Heart right ventricle (tissue), 16 donors: ENCODE measurements at regions of chr17 and their contacts with region 1.

Region 1: DNA sequence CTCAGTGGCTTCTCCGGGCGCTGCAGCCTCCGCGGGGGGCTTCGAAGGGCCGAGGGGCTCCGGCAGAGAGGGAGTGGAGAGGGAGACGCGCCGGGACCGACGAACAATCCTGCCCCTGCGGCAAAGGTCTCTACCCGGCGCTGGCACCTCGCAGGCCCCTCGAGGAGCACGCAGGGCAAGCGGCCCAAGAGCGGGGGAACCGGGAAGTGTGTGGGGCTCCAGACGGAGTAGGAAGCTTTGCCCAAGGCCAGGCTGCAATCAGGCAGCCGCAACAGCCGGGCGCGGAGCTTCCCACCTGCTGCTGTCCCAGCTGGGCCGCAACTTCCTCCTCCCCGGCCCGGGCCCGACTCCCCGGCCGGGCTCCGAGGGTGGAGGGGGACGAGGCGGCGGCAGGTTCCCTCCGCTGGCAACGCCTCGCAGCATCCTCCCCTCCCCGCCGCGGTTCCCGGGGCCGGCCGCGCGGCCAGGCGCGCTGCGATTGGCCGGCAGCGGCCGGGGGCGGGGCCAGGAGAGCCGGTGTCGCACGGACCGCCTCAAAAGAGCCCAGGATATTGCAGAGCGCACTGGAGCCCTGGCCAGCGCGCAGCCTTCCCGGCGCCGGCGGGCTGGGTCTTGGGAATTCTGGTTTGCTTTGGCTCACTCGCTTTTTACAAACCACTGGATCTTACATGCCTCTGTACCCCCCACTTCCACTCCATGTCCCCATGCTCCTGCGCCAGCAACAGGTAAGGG is at the start of gene KCNJ2:
- DNase-seq: peak; percentile 88 to 91
- ATAC-seq: peak; percentile 87 to 97 (median 94)
- H3K4me3 ChIP-seq: peak within 1 kb of the TSS; percentile 62 to 97 (median 78)
- H3K27ac ChIP-seq: peak within 1 kb of the TSS; percentile 89 to 98 (median 95)
- H3K4me1 ChIP-seq: peaks cover 0 to 29% (median 14%) of the 10 kb centered on the region in 9 donors
- H3K27me3 ChIP-seq: no peaks in the 10 kb centered on the region
- CTCF ChIP-seq: no peak
- total RNA-seq, gene KCNJ2: 16.7 to 76.0 (median 46.8) TPM

Region 2: GRCh38 chr17:69607162-69607834 is 561.8 kb before region 1 on chr17:
- intact Hi-C with region 1: loop called in 1 of 10 experiments (anchors 5 kb)
- DNase-seq: peak; percentile 65 to 78
- ATAC-seq: peak; percentile 78 to 92 (median 87)
- H3K4me3 ChIP-seq: no peak overlapping the region
- H3K27ac ChIP-seq: peak overlapping the region; percentile 5 to 82 (median 50)
- H3K4me1 ChIP-seq: peaks cover 15 to 40% (median 35%) of the 10 kb centered on the region in 9 donors
- H3K27me3 ChIP-seq: no peaks in the 10 kb centered on the region
- CTCF ChIP-seq: peak; percentile 74 to 92 (median 88)

Region 3: DNA sequence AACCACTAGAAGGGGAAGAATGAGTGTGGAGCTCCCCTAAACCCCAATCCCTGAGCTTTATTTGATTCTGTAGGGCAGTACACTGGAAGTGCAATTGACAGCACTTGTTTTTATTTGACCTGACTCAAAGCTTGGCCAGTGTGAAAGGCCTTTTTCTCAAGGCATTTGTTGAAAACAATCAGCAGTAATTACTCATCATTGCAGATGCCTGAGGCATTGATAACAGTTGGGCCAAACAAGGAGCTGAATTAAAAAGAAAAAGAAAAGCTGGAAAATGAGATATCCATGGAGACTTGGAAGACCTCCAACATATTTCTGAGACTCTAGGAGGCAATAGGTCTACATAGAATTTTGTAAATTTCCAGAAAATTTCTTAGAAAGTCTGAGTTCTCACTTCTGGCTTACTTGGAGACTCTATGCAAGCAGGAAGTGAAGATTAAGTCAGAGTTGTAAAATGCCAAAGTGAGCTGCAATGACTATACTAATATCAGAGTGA is 294.9 kb before region 1 on chr17:
- intact Hi-C with region 1: no loop called
- DNase-seq: no peak
- ATAC-seq: no peak
- H3K4me3 ChIP-seq: no peak overlapping the region
- H3K27ac ChIP-seq: no peak overlapping the region
- H3K4me1 ChIP-seq: peaks cover 0 to 7% (median 0%) of the 10 kb centered on the region in 9 donors
- H3K27me3 ChIP-seq: no peaks in the 10 kb centered on the region
- CTCF ChIP-seq: no peak

Region 4: DNA sequence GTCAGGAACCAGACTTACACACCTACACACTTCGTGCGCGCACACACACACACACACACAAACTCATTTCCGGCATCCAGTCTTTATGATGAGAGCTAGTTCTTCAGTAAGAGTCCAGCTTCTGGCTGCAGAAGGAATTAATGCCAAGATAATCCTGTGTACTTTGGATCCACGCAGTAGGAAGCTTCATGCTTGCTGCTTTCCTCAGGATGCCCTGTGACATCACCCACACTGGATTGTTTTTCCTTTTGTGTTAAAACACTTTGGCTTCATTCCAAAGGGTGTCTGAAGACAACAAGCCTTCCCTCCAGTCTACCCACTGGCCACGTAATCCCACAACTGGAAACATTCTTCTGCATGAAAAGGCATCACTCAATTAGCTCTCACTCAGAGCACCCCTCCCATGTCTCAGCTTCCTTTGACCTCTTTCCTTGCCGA is 58.7 kb before region 1 on chr17:
- intact Hi-C with region 1: no loop called
- DNase-seq: peak in 1 of 2 donors; percentile 49
- ATAC-seq: peak; percentile 63 to 95 (median 76)
- H3K4me3 ChIP-seq: no peak overlapping the region
- H3K27ac ChIP-seq: peak overlapping the region in 8 of 10 donors; percentile 3 to 77 (median 54)
- H3K4me1 ChIP-seq: peaks cover 3 to 30% (median 15%) of the 10 kb centered on the region in 9 donors
- H3K27me3 ChIP-seq: no peaks in the 10 kb centered on the region
- CTCF ChIP-seq: no peak

Region 5: GRCh38 chr17:70307430-70308225 is 138.5 kb after region 1 on chr17:
- intact Hi-C with region 1: loop called in 4 of 10 experiments (anchors 5 to 10 kb)
- DNase-seq: no peak
- ATAC-seq: peak in 5 of 8 donors; percentile 47 to 85 (median 70)
- H3K4me3 ChIP-seq: no peak overlapping the region
- H3K27ac ChIP-seq: no peak overlapping the region
- H3K4me1 ChIP-seq: peaks cover 0 to 28% (median 0%) of the 10 kb centered on the region in 9 donors
- H3K27me3 ChIP-seq: no peaks in the 10 kb centered on the region
- CTCF ChIP-seq: no peak

Region 6: DNA sequence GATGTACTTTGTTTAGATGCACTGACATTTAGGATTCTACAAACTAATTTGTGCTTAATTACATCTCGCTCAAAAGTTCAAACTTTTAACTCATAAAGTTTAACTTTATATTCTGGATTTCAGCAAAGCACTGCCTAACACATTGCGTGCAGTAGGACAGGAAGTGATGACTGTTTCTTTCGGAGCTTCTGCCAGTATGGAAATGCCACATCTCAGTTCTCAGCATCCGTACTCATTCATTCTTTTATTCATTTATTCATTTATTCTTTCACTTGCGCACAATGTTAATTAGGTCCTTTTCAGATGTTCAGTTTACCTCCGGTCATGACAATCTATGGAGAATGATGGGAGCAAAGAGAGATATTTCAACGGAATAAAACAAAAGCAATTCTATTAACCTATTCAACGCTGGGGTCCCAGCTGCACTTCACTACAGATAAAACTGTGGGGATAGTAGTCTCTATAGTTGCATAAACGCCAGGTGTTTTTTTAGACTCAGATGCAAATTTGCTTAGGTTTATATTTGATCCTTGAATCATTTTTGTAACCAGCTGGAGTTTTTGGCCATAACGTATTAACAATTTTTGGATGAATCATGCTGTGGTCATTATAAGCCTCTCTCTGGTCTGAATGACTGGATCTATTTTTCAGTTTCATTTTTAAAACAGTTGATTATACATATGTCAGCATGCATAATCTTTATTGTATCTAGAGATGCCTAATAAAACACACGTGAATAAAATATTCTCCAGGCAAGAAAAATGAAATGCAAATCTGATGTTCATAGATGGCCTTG is 144.1 kb after region 1 on chr17:
- intact Hi-C with region 1: loop called in 4 of 10 experiments (anchors 5 to 10 kb)
- DNase-seq: no peak
- ATAC-seq: no peak
- H3K4me3 ChIP-seq: no peak overlapping the region
- H3K27ac ChIP-seq: peak overlapping the region in 1 of 10 donors; percentile 80
- H3K4me1 ChIP-seq: peaks cover 0 to 27% (median 0%) of the 10 kb centered on the region in 9 donors
- H3K27me3 ChIP-seq: no peaks in the 10 kb centered on the region
- CTCF ChIP-seq: no peak

Region 7: DNA sequence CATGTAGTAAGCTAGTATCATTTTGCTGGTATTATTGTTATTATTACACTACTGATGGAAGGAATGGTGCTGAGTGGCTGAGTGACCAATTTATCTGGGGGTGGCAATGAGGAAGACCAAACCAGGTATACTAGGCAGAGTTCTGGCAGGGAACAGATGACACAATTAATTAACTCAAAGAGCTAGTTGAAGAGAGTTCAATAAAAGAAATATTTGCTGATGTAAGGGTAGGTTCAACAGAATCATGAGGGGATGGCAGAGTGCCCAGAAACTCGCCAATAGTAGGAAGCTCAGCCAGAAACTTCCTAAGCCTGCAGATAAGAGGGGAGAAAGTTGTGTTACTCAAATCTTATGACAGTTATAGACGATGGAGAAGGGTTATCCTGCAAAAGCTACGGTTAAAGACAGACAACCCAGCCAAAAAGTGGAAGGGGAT is 352.7 kb after region 1 on chr17:
- intact Hi-C with region 1: loop called in 1 of 10 experiments (anchors 10 kb)
- DNase-seq: peak; percentile 14 to 62
- ATAC-seq: peak; percentile 16 to 89 (median 82)
- H3K4me3 ChIP-seq: no peak overlapping the region
- H3K27ac ChIP-seq: peak overlapping the region in 7 of 10 donors; percentile 7 to 79 (median 61)
- H3K4me1 ChIP-seq: peaks cover 0 to 23% (median 12%) of the 10 kb centered on the region in 9 donors
- H3K27me3 ChIP-seq: no peaks in the 10 kb centered on the region
- CTCF ChIP-seq: no peak

Region 8: GRCh38 chr17:70563281-70563820 is 394.2 kb after region 1 on chr17:
- intact Hi-C with region 1: loop called in 2 of 10 experiments (anchors 5 to 10 kb)
- DNase-seq: peak in 1 of 2 donors; percentile 33
- ATAC-seq: peak in 6 of 8 donors; percentile 63 to 97 (median 78)
- H3K4me3 ChIP-seq: no peak overlapping the region
- H3K27ac ChIP-seq: peak overlapping the region in 3 of 10 donors; percentile 15 to 46 (median 39)
- H3K4me1 ChIP-seq: peaks cover 0 to 13% (median 5%) of the 10 kb centered on the region in 9 donors
- H3K27me3 ChIP-seq: no peaks in the 10 kb centered on the region
- CTCF ChIP-seq: no peak